B cell (primary cell): ENCODE measurements at regions of chr1 and their contacts with region 1.

Region 1: DNA sequence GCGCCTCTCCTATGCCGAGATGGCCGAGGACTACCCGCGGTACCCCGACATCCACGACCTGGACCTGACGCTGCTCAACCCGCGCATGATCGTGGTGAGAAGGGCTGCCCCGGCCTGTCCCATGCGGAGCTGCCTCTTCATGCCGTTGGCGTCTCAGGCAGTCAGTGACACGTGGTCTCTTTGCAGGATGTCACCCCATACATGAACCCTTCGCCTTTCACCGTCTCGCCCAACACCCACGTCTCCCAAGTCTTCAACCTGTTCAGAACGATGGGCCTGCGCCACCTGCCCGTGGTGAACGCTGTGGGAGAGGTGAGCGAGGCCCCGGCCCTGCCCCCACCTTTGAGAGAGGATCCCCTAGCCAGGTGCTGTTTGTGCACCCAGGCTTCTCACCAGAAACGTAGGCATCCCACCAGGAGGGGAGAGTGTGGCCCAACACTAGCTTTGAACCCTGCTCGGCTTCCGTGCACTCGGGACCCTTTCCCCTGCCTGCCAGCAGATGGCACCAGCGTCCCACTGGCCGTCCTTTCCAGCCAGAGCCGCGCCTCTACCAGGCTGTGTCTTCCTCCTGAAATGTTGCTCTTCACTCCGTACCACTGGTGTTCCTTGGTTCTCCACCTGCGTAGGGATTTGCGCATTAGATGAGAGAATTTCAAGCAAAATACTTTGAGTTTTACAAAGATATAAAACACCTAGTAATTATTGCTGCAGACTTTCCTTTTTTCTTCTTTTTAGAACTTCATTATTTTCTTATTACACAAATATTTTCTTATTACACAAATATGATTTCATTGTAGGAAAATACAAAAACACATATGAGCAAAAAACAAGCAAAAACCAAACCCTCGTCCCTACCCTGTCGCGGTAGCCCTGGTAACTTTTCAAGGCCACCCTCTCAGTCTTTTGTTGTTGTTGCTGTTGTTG is 9.0 kb downstream of the NPPA start:
- DNase-seq: peak; percentile 74
- ATAC-seq: peak; percentile 84
- H3K4me3 ChIP-seq: no peak overlapping the region
- H3K4me3 Mint-ChIP-seq: no peak overlapping the region
- H3K27ac ChIP-seq: no peak overlapping the region
- H3K27ac Mint-ChIP-seq: peak overlapping the region; percentile 23
- H3K4me1 ChIP-seq: peaks cover 14 to 22% of the 10 kb centered on the region in 2 donors
- H3K4me1 Mint-ChIP-seq: peaks cover 27% of the 10 kb centered on the region
- H3K27me3 ChIP-seq: no peaks in the 10 kb centered on the region
- H3K27me3 Mint-ChIP-seq: no peaks in the 10 kb centered on the region
- CTCF ChIP-seq: peak; percentile 98

Region 2: DNA sequence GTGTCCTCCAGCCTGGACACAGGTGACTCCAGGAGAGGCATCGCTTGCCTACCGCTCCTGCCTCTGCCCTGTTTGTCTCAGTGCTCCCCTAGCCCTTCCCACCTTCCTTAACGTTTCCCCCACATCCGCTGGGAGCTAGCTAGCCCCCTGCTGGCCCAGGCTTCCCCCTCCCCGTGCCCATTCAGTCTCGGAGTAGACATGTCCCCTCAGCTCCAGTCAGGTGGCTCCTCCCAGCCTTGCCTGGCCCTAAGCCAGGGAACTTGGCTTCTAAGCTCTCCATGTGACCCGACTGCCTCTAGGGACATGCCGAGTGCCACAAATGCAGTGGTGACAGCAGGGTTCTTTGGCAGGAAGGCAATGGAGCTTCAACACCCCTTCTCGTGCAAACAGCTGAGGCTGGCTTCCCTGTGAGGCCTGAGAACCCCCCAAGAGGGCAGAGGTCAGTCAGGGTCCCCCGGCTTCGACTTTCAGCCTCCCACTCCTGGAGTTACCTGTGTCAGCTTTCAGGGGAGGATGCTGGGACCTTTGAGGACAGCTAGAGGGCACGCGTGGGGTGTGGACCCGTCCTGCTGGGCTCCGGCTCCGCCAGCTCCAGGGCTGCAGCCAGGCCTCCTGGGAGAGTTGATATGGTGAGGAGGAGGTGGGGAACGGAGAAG is 130.9 kb before region 1 on chr1:
- CTCF ChIA-PET with region 1: no interaction called
- POLR2A ChIA-PET with region 1: no interaction called
- intact Hi-C with region 1: no loop called
- DNase-seq: no peak
- ATAC-seq: no peak
- H3K4me3 ChIP-seq: no peak overlapping the region
- H3K4me3 Mint-ChIP-seq: no peak overlapping the region
- H3K27ac ChIP-seq: no peak overlapping the region
- H3K27ac Mint-ChIP-seq: no peak overlapping the region
- H3K4me1 ChIP-seq: no peaks in the 10 kb centered on the region
- H3K4me1 Mint-ChIP-seq: no peaks in the 10 kb centered on the region
- H3K27me3 ChIP-seq: peaks cover 0 to 12% (median 0%) of the 10 kb centered on the region in 4 experiments
- H3K27me3 Mint-ChIP-seq: peaks cover 13% of the 10 kb centered on the region
- CTCF ChIP-seq: no peak

Region 3: GRCh38 chr1:11893907-11894251 is 55.3 kb after region 1 on chr1:
- CTCF ChIA-PET with region 1: interaction called, 36 read pairs
- POLR2A ChIA-PET with region 1: no interaction called
- intact Hi-C with region 1: loop called (anchors 1 kb)
- DNase-seq: peak; percentile 77
- ATAC-seq: peak; percentile 94
- H3K4me3 ChIP-seq: no peak overlapping the region
- H3K4me3 Mint-ChIP-seq: no peak overlapping the region
- H3K27ac ChIP-seq: no peak overlapping the region
- H3K27ac Mint-ChIP-seq: peak overlapping the region; percentile 78
- H3K4me1 ChIP-seq: no peaks in the 10 kb centered on the region
- H3K4me1 Mint-ChIP-seq: no peaks in the 10 kb centered on the region
- H3K27me3 ChIP-seq: peaks cover 0 to 14% (median 3%) of the 10 kb centered on the region in 4 experiments
- H3K27me3 Mint-ChIP-seq: peaks cover 12% of the 10 kb centered on the region
- CTCF ChIP-seq: peak; percentile 86

Region 4: DNA sequence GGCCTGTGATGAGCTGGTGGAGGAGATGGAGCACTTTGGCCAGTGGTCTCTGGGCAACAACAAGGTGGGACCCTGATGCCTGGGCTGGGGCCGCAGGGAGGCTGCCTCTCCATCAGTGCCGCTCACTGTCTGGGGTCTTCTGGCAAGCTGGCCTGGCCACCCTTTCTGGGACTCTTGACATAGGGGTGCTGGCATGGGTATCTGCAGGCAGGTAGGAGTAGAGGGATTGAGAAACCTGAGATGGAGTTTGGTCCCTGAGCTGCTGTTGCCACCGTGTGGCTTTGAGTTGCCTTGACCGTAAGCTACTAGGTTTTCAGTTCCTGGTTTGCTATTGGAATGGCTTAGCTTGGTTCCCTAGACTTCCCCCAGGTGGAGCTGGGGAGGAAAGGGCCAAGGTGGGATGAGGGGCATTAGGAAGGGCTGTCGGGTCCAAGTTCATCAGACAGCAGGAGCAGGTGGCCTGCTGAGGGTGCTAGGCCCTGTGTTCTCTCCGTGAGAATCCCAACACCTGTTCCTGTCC is 128.5 kb after region 1 on chr1:
- CTCF ChIA-PET with region 1: interaction called, 36 read pairs
- POLR2A ChIA-PET with region 1: no interaction called
- intact Hi-C with region 1: no loop called
- DNase-seq: peak; percentile 33
- ATAC-seq: peak; percentile 57
- H3K4me3 ChIP-seq: no peak overlapping the region
- H3K4me3 Mint-ChIP-seq: no peak overlapping the region
- H3K27ac ChIP-seq: no peak overlapping the region
- H3K27ac Mint-ChIP-seq: no peak overlapping the region
- H3K4me1 ChIP-seq: no peaks in the 10 kb centered on the region
- H3K4me1 Mint-ChIP-seq: no peaks in the 10 kb centered on the region
- H3K27me3 ChIP-seq: no peaks in the 10 kb centered on the region
- H3K27me3 Mint-ChIP-seq: no peaks in the 10 kb centered on the region
- CTCF ChIP-seq: peak; percentile 27